K562 (cell line): ENCODE measurements at regions of chr6 and their contacts with region 1.

Region 1: GRCh38 chr6:52284460-52285176 is at the start of gene MCM3:
- DNase-seq: peak; percentile 95 to 99 (median 97)
- ATAC-seq: peak; percentile 98
- H3K4me3 ChIP-seq: peak within 1 kb of the TSS; percentile 77
- H3K27ac ChIP-seq: peak within 1 kb of the TSS; percentile 88
- H3K4me1 ChIP-seq: peaks cover 6 to 24% of the 10 kb centered on the region in 2 experiments
- H3K27me3 ChIP-seq: no peaks in the 10 kb centered on the region
- CTCF ChIP-seq: no peak
- EP300 ChIP-seq: 0 out of 2 replicates have a peak, but pooled peaks have one; percentile 3
- POLR2A ChIP-seq: peak; percentile 90
- RAD21 ChIP-seq: no peak
- polyA plus RNA-seq, gene MCM3: 76.1 to 141 TPM

Region 2: GRCh38 chr6:52361945-52362442 is 77.4 kb after region 1 on chr6 and contains the start of gene PAQR8:
- CTCF ChIA-PET with region 1: interaction called, 3 read pairs
- POLR2A ChIA-PET with region 1: interaction called, 5 read pairs
- in situ Hi-C with region 1: no loop called
- intact Hi-C with region 1: loop called (anchors 1 kb)
- DNase-seq: peak; percentile 84 to 98 (median 96)
- ATAC-seq: peak; percentile 92
- H3K4me3 ChIP-seq: peak within 1 kb of the TSS; percentile 85
- H3K27ac ChIP-seq: peak within 1 kb of the TSS; percentile 78
- H3K4me1 ChIP-seq: peaks cover 20 to 33% of the 10 kb centered on the region in 2 experiments
- H3K27me3 ChIP-seq: no peaks in the 10 kb centered on the region
- CTCF ChIP-seq: no peak
- EP300 ChIP-seq: no peak; the same call in 1 of the 2 replicates
- POLR2A ChIP-seq: peak; percentile 66; the same call in 1 of the 2 replicates
- RAD21 ChIP-seq: no peak
- polyA plus RNA-seq, gene PAQR8: 1.4 TPM

Region 3: DNA sequence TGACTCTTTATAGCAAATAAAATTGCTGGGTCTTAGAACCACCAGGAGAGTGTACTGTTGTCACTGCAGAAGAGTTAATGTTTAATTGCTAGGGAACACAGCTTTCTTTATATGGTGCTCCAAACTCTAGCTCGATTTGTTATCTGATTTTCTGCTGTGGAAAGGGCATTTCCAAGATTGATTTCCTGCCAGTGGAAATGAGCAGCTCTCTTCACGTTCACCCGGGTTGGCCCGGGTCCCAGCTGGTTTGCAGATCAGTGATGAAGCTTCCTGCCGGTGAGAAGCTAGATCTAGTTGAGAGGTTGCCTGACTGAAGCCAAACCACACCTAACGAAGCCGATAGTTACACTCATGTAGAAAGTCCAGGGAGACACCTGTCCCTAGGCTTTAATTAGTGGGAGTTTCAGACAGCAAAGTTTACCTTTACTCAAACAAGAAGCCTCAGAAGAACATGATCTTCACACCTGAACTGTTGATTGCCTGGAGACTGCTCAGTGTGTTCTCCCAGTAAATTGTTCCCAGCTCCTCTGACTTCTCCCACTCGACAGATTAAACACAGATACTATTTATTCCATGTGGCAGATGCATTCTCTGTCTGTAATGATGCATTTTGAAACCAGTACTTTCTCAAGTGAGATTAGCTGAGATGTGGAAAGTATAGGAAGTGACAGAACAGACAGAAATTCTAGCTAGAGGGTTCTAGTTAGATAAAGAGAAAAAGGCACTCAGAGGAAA is 105.2 kb after region 1 on chr6:
- CTCF ChIA-PET with region 1: no interaction called
- POLR2A ChIA-PET with region 1: no interaction called
- in situ Hi-C with region 1: no loop called
- intact Hi-C with region 1: loop called (anchors 2 kb)
- DNase-seq: peak; percentile 51 to 66 (median 60)
- ATAC-seq: peak; percentile 70
- H3K4me3 ChIP-seq: 0 out of 2 replicates have a peak overlapping the region, but pooled peaks have one; percentile 2
- H3K27ac ChIP-seq: peak overlapping the region; percentile 75
- H3K4me1 ChIP-seq: peaks cover 11 to 37% of the 10 kb centered on the region in 2 experiments; a peak in 4 of 5 replicates
- H3K27me3 ChIP-seq: no peaks in the 10 kb centered on the region
- CTCF ChIP-seq: no peak
- EP300 ChIP-seq: no peak
- POLR2A ChIP-seq: no peak
- RAD21 ChIP-seq: peak in 1 of 2 experiments; percentile 23; a peak in 3 of 4 replicates

Region 4: DNA sequence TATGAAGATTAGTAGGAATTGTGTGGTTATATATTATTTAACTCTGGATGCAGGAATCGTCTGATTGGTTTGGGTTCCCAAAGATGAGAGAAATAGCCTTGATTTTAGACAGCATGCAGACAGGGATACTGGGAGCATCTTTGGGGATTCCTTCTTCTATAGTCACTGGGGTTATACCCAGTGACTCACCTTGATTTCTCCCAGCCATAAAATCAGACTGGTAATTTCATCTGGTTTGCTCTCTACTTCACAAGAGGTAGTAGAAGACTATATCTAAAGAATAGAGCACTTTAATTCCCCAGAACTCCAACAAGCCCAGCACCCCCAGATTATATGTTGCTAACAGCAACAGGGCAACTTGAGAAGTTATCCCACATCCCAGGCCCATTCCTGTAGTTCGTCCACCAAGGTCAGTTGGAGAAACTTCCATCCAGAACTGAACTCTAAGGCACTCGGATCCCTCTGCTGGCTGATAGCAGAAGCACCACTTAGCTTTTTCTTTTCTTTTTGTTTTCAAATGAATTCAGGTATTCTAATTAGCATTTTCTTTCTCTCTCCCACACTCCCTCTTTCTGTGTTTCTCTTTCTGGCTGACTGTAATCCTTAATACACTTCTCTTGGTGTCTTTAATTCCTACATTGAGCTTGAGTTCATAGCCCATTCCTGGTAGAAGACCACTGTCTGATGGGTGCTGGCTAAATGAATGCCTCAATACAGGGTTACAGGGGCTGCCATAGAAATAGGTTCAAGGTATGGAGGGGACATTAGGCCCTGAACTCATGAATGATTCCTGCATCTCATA is 115.1 kb after region 1 on chr6:
- CTCF ChIA-PET with region 1: interaction called, 24 read pairs
- POLR2A ChIA-PET with region 1: interaction called, 3 read pairs
- in situ Hi-C with region 1: no loop called
- intact Hi-C with region 1: loop called (anchors 1 kb)
- DNase-seq: peak; percentile 54 to 69 (median 58)
- ATAC-seq: peak; percentile 84
- H3K4me3 ChIP-seq: no peak overlapping the region
- H3K27ac ChIP-seq: no peak overlapping the region
- H3K4me1 ChIP-seq: peaks cover 0 to 4% of the 10 kb centered on the region in 2 experiments; a peak in 4 of 5 replicates
- H3K27me3 ChIP-seq: no peaks in the 10 kb centered on the region
- CTCF ChIP-seq: peak; percentile 83 to 95 (median 86)
- EP300 ChIP-seq: no peak
- POLR2A ChIP-seq: no peak
- RAD21 ChIP-seq: peak; percentile 87 to 92

Region 5: DNA sequence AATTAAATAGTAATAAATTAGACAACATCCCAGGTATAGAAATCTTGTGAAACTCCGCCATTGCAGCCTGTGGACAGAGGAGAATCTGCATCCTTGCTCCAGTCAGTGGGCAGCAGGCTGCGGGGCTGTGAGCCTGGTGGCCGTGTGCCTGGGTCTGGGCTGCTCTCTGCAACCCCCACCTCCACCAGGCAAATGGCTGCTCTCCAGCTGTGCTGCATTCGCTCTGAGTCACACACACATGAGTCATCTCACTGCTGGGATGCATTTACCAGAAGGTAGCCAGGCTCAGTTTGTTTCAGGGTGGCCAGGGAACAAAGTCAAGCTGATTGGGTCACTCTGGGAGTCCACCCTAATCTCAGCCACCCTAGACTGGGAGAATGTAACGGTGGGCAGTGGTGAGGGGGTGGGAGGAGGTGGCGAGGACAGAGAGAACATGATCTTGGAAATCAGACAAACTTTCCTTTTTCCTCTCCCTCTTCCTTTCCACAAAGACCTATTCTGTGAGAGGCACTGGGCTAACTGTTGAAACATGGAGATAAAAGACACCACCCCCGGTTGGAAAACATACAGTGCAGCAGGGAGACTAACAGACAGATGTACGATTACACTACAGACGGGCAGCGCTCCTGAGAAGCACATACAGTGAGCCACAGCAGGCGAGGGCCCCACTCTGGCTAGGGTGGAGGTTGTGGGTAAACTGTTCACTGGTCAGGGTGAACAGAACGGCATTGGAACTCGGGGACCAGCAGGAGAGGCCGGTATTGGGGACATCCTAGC is 233.1 kb after region 1 on chr6:
- CTCF ChIA-PET with region 1: no interaction called
- POLR2A ChIA-PET with region 1: no interaction called
- in situ Hi-C with region 1: no loop called
- intact Hi-C with region 1: loop called (anchors 10 kb)
- DNase-seq: peak; percentile 82 to 92 (median 86)
- ATAC-seq: peak; percentile 97
- H3K4me3 ChIP-seq: peak overlapping the region; percentile 23
- H3K27ac ChIP-seq: peak overlapping the region; percentile 90
- H3K4me1 ChIP-seq: peaks cover 29 to 51% of the 10 kb centered on the region in 2 experiments
- H3K27me3 ChIP-seq: no peaks in the 10 kb centered on the region
- CTCF ChIP-seq: 0 out of 6 replicates have a peak, but pooled peaks of 1 of the 3 experiments have one; percentile 6
- EP300 ChIP-seq: peak; percentile 68
- POLR2A ChIP-seq: peak; percentile 76
- RAD21 ChIP-seq: peak in 1 of 2 experiments; percentile 26; a peak in 2 of 4 replicates

Region 6: DNA sequence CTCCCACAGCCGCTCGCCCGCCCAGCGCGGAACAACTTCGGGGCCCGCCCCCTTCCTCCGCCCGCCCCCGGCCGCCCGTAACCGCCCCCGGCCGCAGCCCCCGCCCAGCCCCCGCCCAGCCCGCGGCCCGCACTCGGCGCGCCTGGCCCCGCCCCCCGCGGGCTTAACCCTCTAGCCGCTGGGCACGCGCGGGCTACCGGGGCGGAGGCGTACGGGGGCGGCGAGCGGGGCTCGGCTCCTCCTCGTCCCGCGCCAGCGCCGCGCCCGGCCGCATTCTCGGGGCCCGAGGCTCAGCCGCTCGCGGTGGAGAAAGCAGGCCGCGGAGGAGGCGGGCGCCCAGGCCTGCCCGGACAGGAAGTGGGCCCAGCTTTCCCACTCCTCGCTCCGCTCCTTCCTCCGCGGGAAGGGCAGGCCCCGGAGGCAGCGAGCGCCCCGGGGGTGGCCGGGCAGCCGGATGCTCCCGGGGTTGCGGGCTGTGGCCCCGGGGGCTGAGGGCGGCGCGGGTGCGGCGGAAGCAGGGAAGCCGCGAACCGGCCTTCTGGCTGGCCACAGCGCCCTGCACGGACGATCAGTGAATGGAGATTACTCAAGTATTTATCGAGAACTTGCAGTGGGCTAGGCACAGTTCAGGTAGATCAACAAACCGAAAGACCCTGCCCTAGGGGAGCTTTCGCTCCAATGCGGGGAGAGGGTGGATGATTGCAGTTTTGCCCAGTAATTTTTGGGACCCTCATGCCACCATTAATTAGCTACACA is 292.6 kb after region 1 on chr6 and contains the start of gene TRAM2:
- CTCF ChIA-PET with region 1: no interaction called
- POLR2A ChIA-PET with region 1: no interaction called
- in situ Hi-C with region 1: no loop called
- intact Hi-C with region 1: loop called (anchors 5 kb)
- DNase-seq: peak; percentile 89 to 95 (median 94)
- ATAC-seq: peak; percentile 82
- H3K4me3 ChIP-seq: peak within 1 kb of the TSS; percentile 77
- H3K27ac ChIP-seq: peak within 1 kb of the TSS; percentile 85
- H3K4me1 ChIP-seq: peaks cover 22 to 30% of the 10 kb centered on the region in 2 experiments; a peak in 4 of 5 replicates
- H3K27me3 ChIP-seq: no peaks in the 10 kb centered on the region
- CTCF ChIP-seq: peak; percentile 18 to 28 (median 26); a peak in 2 of 6 replicates
- EP300 ChIP-seq: no peak; the same call in 1 of the 2 replicates
- POLR2A ChIP-seq: peak; percentile 80
- RAD21 ChIP-seq: peak in 1 of 2 experiments; percentile 31; a peak in 2 of 4 replicates
- polyA plus RNA-seq, gene TRAM2: 2.6 to 2.8 TPM